Lower leg skin (tissue), 4 donors: ENCODE measurements at regions of chr12 and their contacts with region 1.

Region 1: GRCh38 chr12:31662176-31662849 is 2.8 kb downstream of the ETFBKMT start:
- DNase-seq: no peak
- H3K4me3 ChIP-seq: no peak overlapping the region
- CTCF ChIP-seq: no peak
- POLR2A ChIP-seq: no peak

Region 2: DNA sequence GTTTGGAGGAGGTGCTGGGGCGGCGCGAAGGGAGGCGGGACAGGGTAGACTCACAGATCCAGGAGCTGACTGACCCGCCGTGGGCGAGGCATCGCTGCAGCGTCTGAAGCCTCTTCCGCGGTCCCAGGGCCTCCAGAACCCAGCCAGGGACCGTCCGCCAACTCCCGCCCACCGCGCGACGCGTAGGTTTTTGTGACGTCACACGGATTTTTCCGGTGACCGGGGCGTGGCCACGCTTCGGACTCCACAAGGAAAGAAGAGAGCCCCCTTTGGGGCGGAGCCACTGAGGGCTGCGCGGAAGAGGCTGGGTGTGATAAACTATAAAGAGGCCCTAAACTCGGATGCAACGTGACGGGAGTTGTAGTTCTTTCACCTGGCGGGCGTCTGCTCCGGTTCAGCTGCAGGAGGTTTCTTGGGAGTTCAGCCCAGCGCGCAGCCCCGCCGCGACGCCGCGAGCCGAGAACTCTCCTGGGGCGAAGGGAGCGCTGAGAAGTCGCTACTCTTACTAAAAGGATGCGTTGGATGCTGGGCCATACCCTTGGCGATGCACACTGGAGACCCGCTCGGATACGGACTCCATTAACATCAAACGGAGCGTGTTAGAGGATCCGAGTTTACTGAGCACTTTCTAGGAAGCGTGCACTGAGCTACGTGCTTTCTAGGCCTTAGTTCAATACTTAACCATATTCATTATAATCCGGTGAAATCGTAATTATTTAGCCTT is 66.8 kb after region 1 on chr12 and contains the start of gene AMN1:
- intact Hi-C with region 1: loop called (anchors 10 kb)
- DNase-seq: peak; percentile 99 to 100
- H3K4me3 ChIP-seq: peak within 1 kb of the TSS; percentile 58
- CTCF ChIP-seq: no peak
- POLR2A ChIP-seq: no peak
- total RNA-seq, gene AMN1: 9.5 to 20.5 (median 10.8) TPM

Region 3: DNA sequence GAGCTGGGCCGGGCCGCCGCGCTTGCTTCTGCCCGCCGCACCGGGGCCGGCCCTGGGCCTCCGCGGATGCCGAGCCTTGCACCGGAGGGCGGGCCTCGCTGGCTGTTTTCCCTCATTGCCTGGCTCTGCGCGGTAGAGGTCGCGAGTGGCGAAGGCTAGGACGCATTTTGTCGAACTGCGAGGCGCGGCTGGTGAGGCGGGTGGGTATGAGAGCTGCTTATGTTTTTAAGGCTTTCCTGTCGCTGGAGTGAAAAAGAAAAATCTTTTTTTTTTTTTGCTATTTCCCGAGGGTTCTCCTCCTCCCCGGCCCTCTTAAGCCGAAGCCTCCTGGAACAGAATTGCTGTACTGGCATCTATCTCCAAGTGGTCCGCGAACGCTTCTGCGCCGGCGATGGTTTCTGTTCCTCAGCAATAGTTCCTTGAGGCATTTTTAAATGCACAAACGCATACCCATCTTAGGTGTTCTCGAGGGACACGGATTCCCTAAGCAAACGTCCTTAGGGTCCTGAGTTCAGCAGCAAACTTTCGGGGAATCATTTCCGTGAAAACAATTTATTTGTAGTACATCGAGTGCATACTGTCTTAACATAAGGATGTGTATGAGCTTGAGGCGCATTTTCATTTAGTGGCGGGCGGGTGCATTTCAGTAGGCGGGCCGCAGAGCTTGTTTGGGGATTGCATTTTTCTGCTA is 297.5 kb after region 1 on chr12:
- intact Hi-C with region 1: loop called (anchors 10 kb)
- DNase-seq: peak; percentile 37 to 92
- H3K4me3 ChIP-seq: peak overlapping the region; percentile 75
- CTCF ChIP-seq: no peak
- POLR2A ChIP-seq: no peak

Region 4: DNA sequence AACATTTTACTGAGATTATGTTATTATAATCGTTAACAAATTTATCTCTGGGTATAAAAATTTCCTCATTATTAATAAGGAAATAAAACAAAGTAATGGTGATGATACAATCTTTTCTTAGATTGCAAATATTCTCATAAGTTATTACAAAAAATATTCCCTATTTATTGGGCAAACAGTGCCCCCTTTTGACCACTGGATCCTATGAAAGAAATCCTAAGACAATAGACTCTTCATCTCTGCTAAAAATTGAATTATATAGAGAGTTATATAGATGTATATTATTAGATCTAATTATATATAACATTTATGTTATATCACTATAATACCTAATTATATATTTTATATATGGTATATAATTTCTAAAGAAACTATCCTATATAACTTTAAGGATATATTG is 642.9 kb after region 1 on chr12:
- intact Hi-C with region 1: loop called (anchors 5 kb)
- DNase-seq: no peak
- H3K4me3 ChIP-seq: no peak overlapping the region
- CTCF ChIP-seq: no peak
- POLR2A ChIP-seq: no peak